ENCODE measurements at regions of chr17 and their contacts with region 1.

Region 1: GRCh38 chr17:17681187-17681848 is at the start of gene RAI1:
- DNase-seq: peak; percentile 90
- H3K4me3 ChIP-seq: peak within 1 kb of the TSS; percentile 62 to 86 (median 75)
- H3K27ac ChIP-seq: peak within 1 kb of the TSS; percentile 93 to 99 (median 97)
- H3K4me1 ChIP-seq: peaks cover 0 to 40% (median 38%) of the 10 kb centered on the region in 4 donors
- H3K27me3 ChIP-seq: no peaks in the 10 kb centered on the region
- CTCF ChIP-seq: peak in 3 of 4 experiments; percentile 17 to 64 (median 37)
- EP300 ChIP-seq: no peak
- POLR2A ChIP-seq: no peak
- total RNA-seq, gene RAI1: 7.4 to 31.9 (median 12.5) TPM

Region 2: GRCh38 chr17:17366941-17367875 is 314.1 kb before region 1 on chr17:
- intact Hi-C with region 1: no loop called
- DNase-seq: no peak
- H3K4me3 ChIP-seq: no peak overlapping the region
- H3K27ac ChIP-seq: no peak overlapping the region
- H3K4me1 ChIP-seq: no peaks in the 10 kb centered on the region
- H3K27me3 ChIP-seq: peaks cover 2 to 32% (median 6%) of the 10 kb centered on the region in 3 donors
- CTCF ChIP-seq: no peak
- EP300 ChIP-seq: peak in 1 of 4 donors; percentile 44
- POLR2A ChIP-seq: no peak

Region 3: GRCh38 chr17:17739388-17740066 is 58.2 kb after region 1 on chr17:
- intact Hi-C with region 1: loop called (anchors 5 kb)
- DNase-seq: peak; percentile 88
- H3K4me3 ChIP-seq: no peak overlapping the region
- H3K27ac ChIP-seq: peak overlapping the region; percentile 76 to 90 (median 80)
- H3K4me1 ChIP-seq: peaks cover 0 to 68% (median 61%) of the 10 kb centered on the region in 4 donors
- H3K27me3 ChIP-seq: no peaks in the 10 kb centered on the region
- CTCF ChIP-seq: no peak
- EP300 ChIP-seq: peak in 1 of 4 donors; percentile 22
- POLR2A ChIP-seq: no peak

Region 4: GRCh38 chr17:17783116-17783824 is 102.0 kb after region 1 on chr17:
- intact Hi-C with region 1: loop called (anchors 2 kb)
- DNase-seq: no peak
- H3K4me3 ChIP-seq: peak overlapping the region; percentile 21 to 56 (median 55)
- H3K27ac ChIP-seq: peak overlapping the region; percentile 87 to 93 (median 92)
- H3K4me1 ChIP-seq: peaks cover 2 to 81% (median 71%) of the 10 kb centered on the region in 4 donors
- H3K27me3 ChIP-seq: no peaks in the 10 kb centered on the region
- CTCF ChIP-seq: no peak
- EP300 ChIP-seq: no peak
- POLR2A ChIP-seq: no peak

Region 5: DNA sequence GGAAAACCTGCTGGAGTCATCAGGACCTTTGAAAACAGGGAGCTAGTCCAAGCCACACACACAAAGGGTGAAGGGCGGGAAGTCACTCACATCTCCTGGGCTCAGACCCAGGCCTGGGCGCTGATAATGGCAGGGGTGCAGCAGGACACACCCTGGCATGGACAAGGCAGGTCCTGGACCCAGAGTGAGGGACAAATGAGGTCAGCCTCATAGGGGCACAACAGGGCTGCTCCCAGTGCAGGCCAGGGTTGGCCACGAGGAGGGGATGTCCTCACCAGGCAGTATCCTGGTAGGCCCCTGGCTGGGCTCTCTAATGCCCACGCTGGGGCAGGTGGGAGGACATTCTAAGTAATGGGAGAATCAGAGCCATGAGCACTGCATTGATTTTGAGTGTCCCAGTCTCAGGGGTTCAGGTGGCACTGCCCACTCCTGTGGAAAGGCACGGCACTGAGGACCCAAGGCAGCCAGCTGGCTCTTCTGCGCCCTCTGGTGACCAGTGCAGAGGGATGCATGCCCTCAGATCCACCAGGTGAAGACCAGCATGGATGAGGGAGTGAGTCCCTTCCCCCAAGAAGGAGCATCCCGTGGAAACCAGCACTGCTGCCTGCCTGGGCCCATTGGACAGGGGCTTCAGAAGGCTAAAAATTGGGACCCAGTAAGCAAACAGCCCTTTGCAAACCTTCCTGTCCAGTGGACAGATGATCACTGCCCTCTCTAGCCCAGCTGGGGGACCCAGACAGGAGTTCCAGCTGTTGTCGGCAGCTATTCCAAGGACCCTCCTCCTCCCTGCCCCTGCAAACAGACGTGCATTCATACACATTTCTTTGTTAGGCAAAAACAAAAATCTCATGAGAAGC is 178.8 kb after region 1 on chr17:
- intact Hi-C with region 1: loop called (anchors 2 kb)
- DNase-seq: peak; percentile 82
- H3K4me3 ChIP-seq: no peak overlapping the region
- H3K27ac ChIP-seq: peak overlapping the region in 2 of 4 donors; percentile 3 to 7
- H3K4me1 ChIP-seq: peaks cover 0 to 20% (median 8%) of the 10 kb centered on the region in 4 donors
- H3K27me3 ChIP-seq: no peaks in the 10 kb centered on the region
- CTCF ChIP-seq: peak; percentile 91 to 98 (median 96)
- EP300 ChIP-seq: no peak
- POLR2A ChIP-seq: no peak

Region 6: DNA sequence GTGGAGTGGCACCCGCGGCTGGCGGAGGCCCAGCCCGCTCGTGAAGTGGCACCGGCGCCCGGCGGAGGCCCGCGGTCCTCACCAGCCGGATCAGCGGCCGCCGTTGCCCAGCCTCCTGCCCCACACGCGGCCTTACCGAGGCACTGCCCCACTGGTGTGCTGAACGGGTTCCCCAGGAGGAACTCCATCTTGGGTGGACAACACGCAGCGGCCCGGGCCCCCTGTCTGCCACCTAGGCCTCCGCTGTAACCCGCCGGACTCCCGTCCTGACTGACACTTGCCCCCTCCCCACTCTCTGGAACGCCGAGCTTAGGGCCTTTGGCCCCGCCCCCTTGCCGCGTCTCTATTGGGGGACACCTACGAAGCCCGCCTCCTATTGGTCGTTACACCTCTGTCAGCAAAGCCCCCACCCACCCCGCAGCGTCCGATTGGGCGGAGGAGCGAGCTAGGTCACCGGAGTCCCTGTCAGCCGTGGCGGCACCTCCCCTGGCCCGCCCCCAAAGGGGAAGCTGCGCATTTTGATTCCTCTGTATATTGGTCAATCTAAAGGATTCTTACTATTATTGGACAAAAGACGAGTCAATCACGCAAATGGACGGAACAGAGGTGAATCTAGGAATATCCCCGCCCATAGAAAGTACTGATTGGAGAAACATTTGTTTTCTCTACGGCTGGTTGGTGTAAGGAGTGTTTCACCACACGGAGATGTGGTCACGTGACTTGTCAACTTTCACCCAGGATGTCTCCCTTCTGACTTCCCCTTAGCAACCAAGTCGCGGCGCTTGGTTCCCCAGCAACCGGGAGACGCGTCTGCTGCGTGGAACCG is 291.0 kb after region 1 on chr17 and contains the starts of genes DRC3 and TOM1L2:
- intact Hi-C with region 1: loop called (anchors 5 kb)
- DNase-seq: peak; percentile 100
- H3K4me3 ChIP-seq: peak within 1 kb of the TSS; percentile 75 to 98 (median 84)
- H3K27ac ChIP-seq: peak within 1 kb of the TSS; percentile 89 to 95 (median 94)
- H3K4me1 ChIP-seq: peaks cover 0 to 38% (median 27%) of the 10 kb centered on the region in 4 donors
- H3K27me3 ChIP-seq: no peaks in the 10 kb centered on the region
- CTCF ChIP-seq: peak in 1 of 4 experiments; percentile 9
- EP300 ChIP-seq: no peak
- POLR2A ChIP-seq: peak; percentile 85 to 90
- total RNA-seq, gene DRC3: 0.36 to 6.1 (median 1.8) TPM
- total RNA-seq, gene TOM1L2: 38.2 to 215 (median 66.2) TPM

Region 7: DNA sequence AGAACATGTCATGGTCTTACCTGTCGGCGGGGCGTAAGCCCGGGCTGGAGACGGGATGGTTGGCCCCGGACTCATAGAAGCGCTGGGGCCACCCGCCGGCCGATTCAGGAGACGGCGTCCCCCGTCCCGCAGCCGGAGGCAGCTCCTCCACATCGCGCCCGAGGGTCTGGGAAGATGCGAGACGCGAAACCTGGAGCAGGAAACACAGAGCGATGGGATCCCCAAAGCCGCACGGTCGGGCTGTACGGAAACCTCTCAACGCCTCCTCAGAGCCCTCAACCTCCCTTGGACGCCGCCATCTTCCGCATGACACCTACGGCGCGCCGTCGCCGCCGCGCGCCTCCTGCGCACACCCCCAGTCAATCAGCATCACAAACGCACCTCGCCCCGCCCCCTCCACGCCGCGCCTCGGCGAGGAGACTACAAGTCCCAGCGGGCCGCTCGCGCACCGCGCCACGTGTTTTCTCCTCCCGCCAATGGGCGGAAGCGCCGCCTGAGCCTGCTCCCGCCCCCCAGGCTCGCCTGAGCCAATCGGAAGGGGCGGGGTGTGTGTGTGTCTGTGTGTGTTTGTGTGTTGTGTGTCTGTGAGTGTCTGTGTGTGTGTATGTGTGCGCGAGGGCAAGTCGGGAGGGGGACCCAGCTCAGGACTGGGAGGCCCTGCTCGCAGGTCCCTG is 357.7 kb after region 1 on chr17 and contains the starts of genes ATPAF2 and GID4:
- intact Hi-C with region 1: loop called (anchors 2 kb)
- DNase-seq: peak; percentile 100
- H3K4me3 ChIP-seq: peak within 1 kb of the TSS; percentile 80 to 96 (median 87)
- H3K27ac ChIP-seq: peak within 1 kb of the TSS; percentile 84 to 91 (median 89)
- H3K4me1 ChIP-seq: peaks cover 0 to 45% (median 37%) of the 10 kb centered on the region in 4 donors
- H3K27me3 ChIP-seq: no peaks in the 10 kb centered on the region
- CTCF ChIP-seq: no peak
- EP300 ChIP-seq: no peak
- POLR2A ChIP-seq: no peak
- total RNA-seq, gene ATPAF2: 10.3 to 28.8 (median 15.3) TPM
- total RNA-seq, gene GID4: 20.0 to 25.2 (median 23.9) TPM

Measured in sigmoid colon (tissue), 7 donors.